Activated CD4-positive, alpha-beta memory T cell treated with anti-CD3 and anti-CD28 coated beads, Interleukin-2, amount 10 ng/mL, durations not matched to agents 7 days and 5 days (primary cell): ENCODE measurements at regions of chr16 and their contacts with region 1.

Region 1: GRCh38 chr16:84548971-84549844 is 44.7 kb upstream of the MEAK7 start:
- DNase-seq: peak; percentile 62
- H3K4me3 Mint-ChIP-seq: peak overlapping the region; percentile 87
- H3K27ac Mint-ChIP-seq: peak overlapping the region; percentile 96
- H3K4me1 Mint-ChIP-seq: peaks cover 58% of the 10 kb centered on the region
- H3K27me3 Mint-ChIP-seq: no peaks in the 10 kb centered on the region

Region 2: DNA sequence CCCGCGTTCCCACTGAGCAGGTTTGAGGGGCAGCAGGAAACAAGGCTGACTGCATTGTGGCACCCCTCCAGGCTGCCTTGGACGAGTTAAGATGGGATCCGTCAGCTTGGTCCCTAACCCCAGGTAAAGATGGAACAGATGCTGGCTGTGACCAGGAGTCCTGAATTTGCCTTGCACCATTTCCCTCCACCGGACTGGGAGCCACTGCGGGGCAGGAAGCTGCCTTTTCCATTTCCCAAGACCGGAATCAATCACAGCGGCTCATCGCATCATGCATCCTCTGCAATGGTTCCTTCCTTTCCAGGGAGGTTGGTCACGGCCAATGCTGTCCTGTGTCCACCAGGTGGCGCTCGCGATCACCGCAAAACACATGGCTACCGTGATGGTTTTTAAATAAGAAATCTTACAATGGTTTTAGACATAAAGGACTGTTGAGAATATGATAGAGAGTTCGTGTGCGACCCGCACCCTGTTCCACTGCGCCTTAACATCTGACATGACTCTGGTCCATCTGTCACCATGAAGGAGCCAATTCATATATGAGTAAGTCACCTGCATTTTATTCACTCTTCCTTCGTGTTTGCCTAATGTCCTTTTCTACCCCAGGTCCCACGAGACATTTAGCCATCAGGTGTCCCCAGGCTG is 37.9 kb before region 1 on chr16:
- CTCF ChIA-PET with region 1: interaction called, 23 read pairs
- POLR2A ChIA-PET with region 1: interaction called, 49 read pairs
- DNase-seq: peak; percentile 79
- H3K4me3 Mint-ChIP-seq: no peak overlapping the region
- H3K27ac Mint-ChIP-seq: peak overlapping the region; percentile 99
- H3K4me1 Mint-ChIP-seq: peaks cover 81% of the 10 kb centered on the region
- H3K27me3 Mint-ChIP-seq: peaks cover 2% of the 10 kb centered on the region

Region 3: GRCh38 chr16:84538222-84538840 is 10.9 kb before region 1 on chr16:
- CTCF ChIA-PET with region 1: interaction called, 6 read pairs
- POLR2A ChIA-PET with region 1: interaction called, 14 read pairs
- DNase-seq: no peak
- H3K4me3 Mint-ChIP-seq: no peak overlapping the region
- H3K27ac Mint-ChIP-seq: no peak overlapping the region
- H3K4me1 Mint-ChIP-seq: peaks cover 16% of the 10 kb centered on the region
- H3K27me3 Mint-ChIP-seq: no peaks in the 10 kb centered on the region

Region 4: GRCh38 chr16:84599521-84600202 is 50.5 kb after region 1 on chr16:
- CTCF ChIA-PET with region 1: interaction called, 12 read pairs
- POLR2A ChIA-PET with region 1: interaction called, 37 read pairs
- DNase-seq: peak; percentile 59
- H3K4me3 Mint-ChIP-seq: peak overlapping the region; percentile 73
- H3K27ac Mint-ChIP-seq: peak overlapping the region; percentile 96
- H3K4me1 Mint-ChIP-seq: peaks cover 93% of the 10 kb centered on the region
- H3K27me3 Mint-ChIP-seq: no peaks in the 10 kb centered on the region

Region 5: GRCh38 chr16:84617791-84618580 is 68.8 kb after region 1 on chr16 and contains the start of gene COTL1:
- CTCF ChIA-PET with region 1: interaction called, 15 read pairs
- POLR2A ChIA-PET with region 1: interaction called, 37 read pairs
- DNase-seq: peak; percentile 95
- H3K4me3 Mint-ChIP-seq: peak within 1 kb of the TSS; percentile 97
- H3K27ac Mint-ChIP-seq: peak within 1 kb of the TSS; percentile 76
- H3K4me1 Mint-ChIP-seq: peaks cover 57% of the 10 kb centered on the region
- H3K27me3 Mint-ChIP-seq: peaks cover 16% of the 10 kb centered on the region
- total RNA-seq, gene COTL1: 676 to 689 TPM